Activated T-helper 2 cell treated with anti-CD3 and anti-CD28 coated beads, Interferon-gamma antibody, Interleukin-2, Interleukin-4, amounts not matched to agents 10 μg/mL and 5 μg/mL and 100 μg/mL, durations not matched to agents 14 hours and 24 hours and 36 hours (primary cell): ENCODE measurements at regions of chr9 and their contacts with region 1.

Region 1: DNA sequence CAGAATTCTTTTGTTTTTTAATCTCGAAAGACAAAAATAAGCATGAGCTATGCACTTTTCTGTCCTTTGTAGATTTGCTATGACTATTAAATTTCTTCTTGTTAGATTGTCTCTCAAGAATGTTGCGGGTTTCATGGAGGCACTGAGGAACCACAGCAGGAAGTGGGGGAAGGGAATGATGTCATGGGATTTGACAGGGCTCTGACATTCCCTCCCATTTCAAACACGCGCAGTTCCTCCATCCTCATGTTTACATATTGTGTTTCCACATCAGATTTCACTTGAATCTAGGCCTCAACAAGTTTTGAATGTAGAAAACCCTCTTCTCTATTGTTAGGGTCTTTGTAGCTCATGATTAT is 154.8 kb downstream of the PALM2AKAP2 start:
- DNase-seq: no peak
- H3K4me3 Mint-ChIP-seq: no peak overlapping the region
- H3K27ac Mint-ChIP-seq: peak overlapping the region; percentile 84
- H3K4me1 Mint-ChIP-seq: peaks cover 50% of the 10 kb centered on the region
- H3K27me3 Mint-ChIP-seq: no peaks in the 10 kb centered on the region

Region 2: DNA sequence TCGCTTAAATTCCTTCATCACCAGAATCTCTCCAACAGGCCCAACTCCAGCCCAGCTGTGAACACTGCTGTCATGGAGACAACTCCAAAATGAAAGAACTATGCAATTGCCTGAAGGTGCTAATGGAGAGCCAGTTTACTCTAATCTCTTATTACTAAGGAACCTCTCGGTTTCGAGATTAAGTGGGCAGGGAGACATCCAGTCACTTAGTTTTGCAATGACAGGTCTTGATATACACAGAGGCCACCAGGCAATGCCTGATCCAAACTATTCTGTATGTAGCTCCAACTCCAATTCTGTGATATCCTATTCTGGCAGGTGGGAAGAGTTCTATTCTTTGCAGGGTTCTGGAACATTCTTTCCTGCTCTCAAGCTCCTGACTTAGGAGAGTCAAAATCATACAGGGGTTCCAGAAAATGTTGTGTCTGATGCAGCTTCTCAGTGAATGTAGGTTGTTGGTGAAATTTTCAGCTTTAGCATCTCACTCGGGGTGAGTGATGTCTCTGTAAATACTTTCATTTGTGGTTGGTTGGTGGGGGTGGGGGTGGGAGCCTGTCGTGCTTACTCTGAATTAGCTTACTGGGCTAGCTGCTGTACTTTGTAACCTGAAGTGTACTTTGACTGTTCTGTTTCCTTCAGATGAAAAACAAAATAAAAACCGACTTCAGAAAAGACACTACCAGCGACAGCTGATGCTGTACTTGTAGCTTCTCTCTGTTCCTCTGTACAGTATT is 16.0 kb after region 1 on chr9:
- intact Hi-C with region 1: loop called (anchors 1 kb)
- DNase-seq: no peak
- H3K4me3 Mint-ChIP-seq: peak overlapping the region; percentile 57
- H3K27ac Mint-ChIP-seq: peak overlapping the region; percentile 93
- H3K4me1 Mint-ChIP-seq: peaks cover 43% of the 10 kb centered on the region
- H3K27me3 Mint-ChIP-seq: no peaks in the 10 kb centered on the region

Region 3: DNA sequence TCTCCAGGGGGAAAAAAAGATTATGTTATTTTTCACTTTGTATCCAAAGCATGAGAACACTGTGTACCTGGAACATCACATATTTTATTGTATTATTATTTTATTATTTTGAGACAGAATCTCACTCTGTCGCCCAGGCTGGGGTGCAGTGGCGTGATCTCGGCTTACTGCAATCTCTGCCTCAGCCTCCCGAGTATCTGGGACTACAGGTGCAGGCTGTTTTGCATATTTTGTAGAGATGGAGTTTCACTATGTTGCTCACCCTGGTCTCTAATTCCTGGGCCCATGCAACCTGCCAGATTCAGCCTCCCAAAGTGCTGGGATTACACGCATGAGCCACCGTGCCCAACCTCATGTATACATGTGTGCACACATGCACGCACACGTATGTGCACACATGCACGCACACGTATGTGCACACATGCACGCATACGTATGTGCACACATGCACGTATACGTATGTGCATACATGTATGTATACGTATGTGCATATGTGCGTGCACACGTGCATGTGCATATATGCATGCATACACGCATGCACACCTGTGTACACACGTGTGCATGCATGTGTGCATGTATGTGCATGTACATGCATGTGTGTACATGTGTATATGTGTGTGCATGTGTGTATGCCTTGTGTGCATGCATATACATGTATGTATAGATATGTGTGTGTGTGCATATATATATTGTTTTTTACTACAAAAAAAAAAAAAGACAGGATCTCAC is 1952.3 kb after region 1 on chr9:
- intact Hi-C with region 1: no loop called
- DNase-seq: no peak
- H3K4me3 Mint-ChIP-seq: no peak overlapping the region
- H3K27ac Mint-ChIP-seq: no peak overlapping the region
- H3K4me1 Mint-ChIP-seq: peaks cover under 1% of the 10 kb centered on the region
- H3K27me3 Mint-ChIP-seq: peaks cover 21% of the 10 kb centered on the region